CD4-positive, alpha-beta memory T cell (primary cell): ENCODE measurements at regions of chr2 and their contacts with region 1.

Region 1: DNA sequence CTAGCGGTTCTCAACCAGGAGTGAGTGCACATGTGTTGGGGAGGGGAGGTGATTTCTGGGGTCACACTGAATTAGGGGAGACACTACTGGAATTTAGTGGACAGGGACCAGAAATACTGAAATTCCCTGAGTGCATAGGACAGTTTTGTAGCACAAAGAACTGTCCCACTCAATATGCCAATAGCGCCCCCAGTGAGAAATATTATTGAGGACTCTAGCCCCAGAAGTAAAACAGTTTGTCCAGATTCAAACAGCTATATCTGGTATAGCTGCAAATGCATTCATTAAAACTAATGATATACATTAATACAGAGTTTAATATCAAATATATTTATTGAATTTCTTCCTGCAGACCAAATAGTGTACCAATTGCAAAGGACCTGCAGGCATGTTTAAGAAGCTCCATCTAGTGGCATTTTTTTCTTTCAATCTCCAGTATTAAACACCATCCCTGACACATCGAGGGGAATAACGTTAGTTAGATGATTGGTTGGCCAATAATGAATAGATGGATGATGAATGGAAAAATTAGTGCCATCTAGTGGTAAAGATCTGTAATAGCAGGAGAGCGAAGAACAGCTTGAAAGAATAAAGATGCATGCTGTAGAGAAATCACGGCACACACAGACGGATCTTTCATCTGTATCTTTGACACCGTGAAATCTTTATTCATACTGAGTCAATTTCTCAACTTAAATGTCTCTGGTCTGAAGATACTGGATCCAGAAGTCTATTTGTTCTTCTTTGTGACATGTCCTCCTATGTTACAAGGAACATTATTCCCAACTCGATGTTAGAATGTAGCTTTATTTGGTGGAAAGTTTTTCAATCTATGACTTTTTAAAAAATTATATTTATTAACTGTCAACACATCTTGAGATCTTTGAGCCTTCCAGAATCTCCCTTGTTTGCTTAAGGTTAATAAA is 62.5 kb downstream of the DHRS9 start:
- DNase-seq: peak in 4 of 5 donors; percentile 52 to 58 (median 54)
- H3K4me3 ChIP-seq: no peak overlapping the region
- H3K4me3 Mint-ChIP-seq: no peak overlapping the region
- H3K27ac ChIP-seq: no peak overlapping the region
- H3K27ac Mint-ChIP-seq: peak overlapping the region in 3 of 7 donors; percentile 1 to 32 (median 18)
- H3K4me1 ChIP-seq: no peaks in the 10 kb centered on the region
- H3K4me1 Mint-ChIP-seq: peaks cover 0 to 6% (median 3%) of the 10 kb centered on the region in 4 donors
- H3K27me3 ChIP-seq: no peaks in the 10 kb centered on the region
- H3K27me3 Mint-ChIP-seq: no peaks in the 10 kb centered on the region

Region 2: GRCh38 chr2:168971261-168971660 is 160.6 kb before region 1 on chr2:
- CTCF ChIA-PET with region 1: interaction called, 40 read pairs
- POLR2A ChIA-PET with region 1: no interaction called
- intact Hi-C with region 1: no loop called
- DNase-seq: no peak
- H3K4me3 ChIP-seq: no peak overlapping the region
- H3K4me3 Mint-ChIP-seq: no peak overlapping the region
- H3K27ac ChIP-seq: no peak overlapping the region
- H3K27ac Mint-ChIP-seq: no peak overlapping the region
- H3K4me1 ChIP-seq: peaks cover 3% of the 10 kb centered on the region
- H3K4me1 Mint-ChIP-seq: peaks cover 3 to 8% (median 5%) of the 10 kb centered on the region in 4 donors
- H3K27me3 ChIP-seq: no peaks in the 10 kb centered on the region
- H3K27me3 Mint-ChIP-seq: no peaks in the 10 kb centered on the region

Region 3: GRCh38 chr2:169095621-169096105 is 36.2 kb before region 1 on chr2:
- CTCF ChIA-PET with region 1: interaction called, 10 read pairs
- POLR2A ChIA-PET with region 1: no interaction called
- intact Hi-C with region 1: no loop called
- DNase-seq: no peak
- H3K4me3 ChIP-seq: no peak overlapping the region
- H3K4me3 Mint-ChIP-seq: peak overlapping the region in 3 of 8 donors; percentile 15 to 49 (median 43)
- H3K27ac ChIP-seq: no peak overlapping the region
- H3K27ac Mint-ChIP-seq: peak overlapping the region in 1 of 7 donors; percentile 9
- H3K4me1 ChIP-seq: peaks cover 10% of the 10 kb centered on the region
- H3K4me1 Mint-ChIP-seq: peaks cover 7 to 16% (median 15%) of the 10 kb centered on the region in 4 donors
- H3K27me3 ChIP-seq: no peaks in the 10 kb centered on the region
- H3K27me3 Mint-ChIP-seq: peaks cover 4 to 5% of the 10 kb centered on the region in 2 donors

Region 4: GRCh38 chr2:169119126-169119770 is 12.6 kb before region 1 on chr2:
- CTCF ChIA-PET with region 1: interaction called, 423 read pairs
- POLR2A ChIA-PET with region 1: no interaction called
- intact Hi-C with region 1: no loop called
- DNase-seq: no peak
- H3K4me3 ChIP-seq: no peak overlapping the region
- H3K4me3 Mint-ChIP-seq: no peak overlapping the region
- H3K27ac ChIP-seq: no peak overlapping the region
- H3K27ac Mint-ChIP-seq: no peak overlapping the region
- H3K4me1 ChIP-seq: no peaks in the 10 kb centered on the region
- H3K4me1 Mint-ChIP-seq: peaks cover 0 to 6% (median 0%) of the 10 kb centered on the region in 4 donors
- H3K27me3 ChIP-seq: no peaks in the 10 kb centered on the region
- H3K27me3 Mint-ChIP-seq: peaks cover 7 to 13% of the 10 kb centered on the region in 2 donors